ENCODE measurements at regions of chr1 and their contacts with region 1.

Region 1: GRCh38 chr1:34742667-34743270 is 12.1 kb upstream of the GJB5 start:
- DNase-seq: peak; percentile 69 to 78
- ATAC-seq: peak; percentile 70 to 98 (median 83)
- H3K4me3 ChIP-seq: no peak overlapping the region
- H3K4me3 Mint-ChIP-seq: no peak overlapping the region
- H3K27ac ChIP-seq: no peak overlapping the region
- H3K27ac Mint-ChIP-seq: no peak overlapping the region
- H3K4me1 ChIP-seq: peaks cover 3% of the 10 kb centered on the region
- H3K4me1 Mint-ChIP-seq: peaks cover 4 to 8% of the 10 kb centered on the region in 2 donors
- H3K27me3 ChIP-seq: no peaks in the 10 kb centered on the region
- H3K27me3 Mint-ChIP-seq: peaks cover 6 to 10% of the 10 kb centered on the region in 2 donors
- CTCF ChIP-seq: peak; percentile 88

Region 2: DNA sequence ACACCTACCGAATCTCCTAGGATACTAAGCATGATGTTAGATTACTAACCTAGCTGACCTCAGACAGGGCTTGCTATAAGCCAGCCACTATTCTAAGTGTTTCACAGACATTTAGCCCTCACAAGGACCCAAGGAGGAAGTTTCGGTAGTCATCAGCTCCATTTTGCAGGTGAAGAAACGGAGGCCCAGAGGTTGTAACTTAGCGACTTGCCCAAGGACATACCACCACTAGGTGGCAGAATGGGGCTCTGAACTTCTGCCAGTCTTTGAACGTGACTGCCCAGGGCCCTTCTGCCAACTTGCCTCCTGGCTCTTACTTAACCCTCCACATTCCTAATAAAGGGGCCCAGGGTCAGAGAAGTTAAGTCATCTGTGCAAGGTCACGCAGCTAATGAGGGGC is 282.6 kb before region 1 on chr1:
- intact Hi-C with region 1: loop called (anchors 1 kb)
- DNase-seq: peak in 1 of 2 donors; percentile 48
- ATAC-seq: peak in 1 of 3 donors; percentile 41
- H3K4me3 ChIP-seq: no peak overlapping the region
- H3K4me3 Mint-ChIP-seq: no peak overlapping the region
- H3K27ac ChIP-seq: no peak overlapping the region
- H3K27ac Mint-ChIP-seq: no peak overlapping the region
- H3K4me1 ChIP-seq: no peaks in the 10 kb centered on the region
- H3K4me1 Mint-ChIP-seq: no peaks in the 10 kb centered on the region
- H3K27me3 ChIP-seq: no peaks in the 10 kb centered on the region
- H3K27me3 Mint-ChIP-seq: peaks cover 4 to 18% of the 10 kb centered on the region in 2 donors
- CTCF ChIP-seq: peak; percentile 60